ENCODE measurements at regions of chr7 and their contacts with region 1.

Region 1: GRCh38 chr7:142478479-142479072 is 220.7 kb upstream of the PRSS58 start:
- DNase-seq: peak; percentile 80
- H3K4me3 Mint-ChIP-seq: no peak overlapping the region
- H3K27ac Mint-ChIP-seq: peak overlapping the region; percentile 22
- H3K4me1 Mint-ChIP-seq: peaks cover 32% of the 10 kb centered on the region
- H3K27me3 Mint-ChIP-seq: peaks cover 9% of the 10 kb centered on the region
- CTCF ChIP-seq: peak; percentile 57

Region 2: GRCh38 chr7:142250705-142251104 is 227.9 kb before region 1 on chr7:
- CTCF ChIA-PET with region 1: no interaction called
- POLR2A ChIA-PET with region 1: no interaction called
- intact Hi-C with region 1: no loop called
- DNase-seq: no peak
- H3K4me3 Mint-ChIP-seq: no peak overlapping the region
- H3K27ac Mint-ChIP-seq: no peak overlapping the region
- H3K4me1 Mint-ChIP-seq: no peaks in the 10 kb centered on the region
- H3K27me3 Mint-ChIP-seq: no peaks in the 10 kb centered on the region
- CTCF ChIP-seq: no peak

Region 3: DNA sequence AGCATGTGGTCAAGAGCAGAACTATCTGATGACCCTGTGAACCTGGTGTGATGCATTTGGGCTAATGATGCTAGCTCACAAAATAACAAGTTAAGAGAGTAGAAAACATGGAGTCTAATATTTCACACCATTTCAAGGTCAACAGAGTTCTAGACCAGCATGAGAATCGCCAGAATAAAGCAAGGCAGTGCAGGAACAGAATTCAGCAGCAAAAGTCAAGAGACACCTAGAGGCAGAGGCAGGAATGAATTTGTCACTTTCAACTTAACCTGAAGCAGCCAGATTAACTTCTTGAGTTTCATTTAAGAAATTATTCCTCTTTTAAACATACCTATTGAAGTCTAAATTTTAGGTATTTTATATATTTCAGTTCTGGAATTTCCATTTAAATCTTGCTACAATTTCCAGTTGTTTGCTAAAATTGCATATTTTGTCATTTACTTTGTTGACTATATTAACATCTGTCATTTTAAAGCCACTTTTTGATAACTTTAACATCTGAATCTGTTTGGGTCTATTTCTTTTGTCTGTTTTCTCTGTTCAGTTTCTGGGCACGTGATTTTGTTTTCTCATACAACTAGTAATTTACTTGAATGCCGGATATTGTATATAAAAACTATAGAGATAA is 176.5 kb before region 1 on chr7:
- CTCF ChIA-PET with region 1: interaction called, 20 read pairs
- POLR2A ChIA-PET with region 1: no interaction called
- intact Hi-C with region 1: no loop called
- DNase-seq: peak; percentile 36
- H3K4me3 Mint-ChIP-seq: no peak overlapping the region
- H3K27ac Mint-ChIP-seq: no peak overlapping the region
- H3K4me1 Mint-ChIP-seq: no peaks in the 10 kb centered on the region
- H3K27me3 Mint-ChIP-seq: peaks cover 50% of the 10 kb centered on the region
- CTCF ChIP-seq: peak; percentile 54

Region 4: DNA sequence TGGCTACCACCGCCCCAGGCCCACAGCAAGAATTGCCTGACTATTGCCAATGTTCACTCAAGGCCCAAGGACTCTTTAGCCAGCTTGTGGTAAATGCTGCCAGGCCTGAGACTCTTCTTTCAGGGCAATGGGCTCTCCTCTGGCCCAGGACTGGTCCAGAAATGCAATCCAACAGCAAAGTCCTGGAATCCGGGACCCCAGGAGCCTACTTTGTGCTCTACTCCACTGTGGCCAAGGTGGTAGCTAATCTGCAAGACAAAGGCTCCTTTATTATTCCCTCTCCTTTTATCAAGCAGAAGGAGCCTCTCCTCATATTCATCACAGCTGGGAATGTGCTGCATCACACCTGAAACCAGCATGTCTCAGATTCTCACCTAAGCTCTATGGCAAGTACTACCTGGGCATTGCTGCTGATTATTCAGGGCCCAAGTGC is 113.2 kb before region 1 on chr7:
- CTCF ChIA-PET with region 1: interaction called, 34 read pairs
- POLR2A ChIA-PET with region 1: no interaction called
- intact Hi-C with region 1: no loop called
- DNase-seq: no peak
- H3K4me3 Mint-ChIP-seq: no peak overlapping the region
- H3K27ac Mint-ChIP-seq: no peak overlapping the region
- H3K4me1 Mint-ChIP-seq: no peaks in the 10 kb centered on the region
- H3K27me3 Mint-ChIP-seq: peaks cover 27% of the 10 kb centered on the region
- CTCF ChIP-seq: no peak

Region 5: GRCh38 chr7:142412551-142413193 is 65.9 kb before region 1 on chr7:
- CTCF ChIA-PET with region 1: interaction called, 4 read pairs
- POLR2A ChIA-PET with region 1: interaction called, 4 read pairs
- intact Hi-C with region 1: loop called (anchors 2 kb)
- DNase-seq: peak; percentile 66
- H3K4me3 Mint-ChIP-seq: no peak overlapping the region
- H3K27ac Mint-ChIP-seq: no peak overlapping the region
- H3K4me1 Mint-ChIP-seq: no peaks in the 10 kb centered on the region
- H3K27me3 Mint-ChIP-seq: no peaks in the 10 kb centered on the region
- CTCF ChIP-seq: peak; percentile 29

Region 6: GRCh38 chr7:142496545-142497041 is 18.0 kb after region 1 on chr7:
- CTCF ChIA-PET with region 1: interaction called, 261 read pairs
- POLR2A ChIA-PET with region 1: interaction called, 5 read pairs
- intact Hi-C with region 1: no loop called
- DNase-seq: peak; percentile 63
- H3K4me3 Mint-ChIP-seq: no peak overlapping the region
- H3K27ac Mint-ChIP-seq: no peak overlapping the region
- H3K4me1 Mint-ChIP-seq: peaks cover 26% of the 10 kb centered on the region
- H3K27me3 Mint-ChIP-seq: peaks cover 28% of the 10 kb centered on the region
- CTCF ChIP-seq: peak; percentile 81

Region 7: GRCh38 chr7:142516038-142516501 is 37.5 kb after region 1 on chr7:
- CTCF ChIA-PET with region 1: interaction called, 78 read pairs
- POLR2A ChIA-PET with region 1: no interaction called
- intact Hi-C with region 1: no loop called
- DNase-seq: peak; percentile 81
- H3K4me3 Mint-ChIP-seq: no peak overlapping the region
- H3K27ac Mint-ChIP-seq: no peak overlapping the region
- H3K4me1 Mint-ChIP-seq: peaks cover 20% of the 10 kb centered on the region
- H3K27me3 Mint-ChIP-seq: no peaks in the 10 kb centered on the region
- CTCF ChIP-seq: peak; percentile 80